Right lobe of liver (tissue), 6 donors: ENCODE measurements at regions of chr17 and their contacts with region 1.

Region 1: DNA sequence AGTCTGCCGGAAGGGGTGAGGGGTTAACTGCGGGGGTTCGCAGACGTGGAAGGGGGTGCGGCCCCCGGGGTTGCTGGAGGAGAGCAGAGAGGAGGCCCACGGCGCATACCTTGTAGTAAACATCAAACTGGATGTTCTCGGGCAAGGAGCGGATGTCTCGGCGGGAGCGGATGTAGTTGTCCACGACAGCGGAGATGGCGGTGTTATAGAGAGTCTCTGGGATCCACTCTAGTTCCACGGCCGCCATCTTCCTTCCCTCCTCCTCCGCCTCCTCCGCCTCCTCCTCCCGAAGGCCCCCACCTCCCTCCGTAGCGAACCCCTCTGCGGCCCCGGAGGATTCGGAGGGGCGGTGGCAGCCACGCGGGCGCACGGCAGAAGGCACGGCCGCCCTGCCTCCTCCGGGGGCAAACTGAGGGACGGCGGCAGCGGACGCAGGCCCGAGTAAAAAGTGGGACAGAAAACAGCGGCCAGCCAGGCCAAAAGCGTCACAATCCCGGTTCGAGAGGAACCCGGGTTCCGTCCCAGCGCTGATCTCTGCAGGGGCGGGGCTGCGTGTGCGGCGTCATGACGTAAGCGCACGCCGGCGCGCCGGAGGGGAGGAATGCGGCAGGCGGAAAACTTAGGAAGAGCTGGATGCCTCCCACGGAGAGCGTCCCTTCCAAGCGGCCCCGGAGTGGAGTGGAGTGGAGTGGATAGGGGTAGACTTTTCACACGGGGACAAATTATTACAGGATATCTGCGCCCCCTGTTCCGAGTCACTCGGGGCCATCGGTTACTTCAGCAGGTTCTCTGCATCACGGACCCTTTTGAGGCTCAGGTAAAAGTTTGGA is at the start of gene APPBP2:
- DNase-seq: peak; percentile 89 to 91 (median 91)
- ATAC-seq: peak; percentile 97 to 98 (median 98)
- H3K4me3 ChIP-seq: peak within 1 kb of the TSS; percentile 71 to 93 (median 79)
- H3K27ac ChIP-seq: peak within 1 kb of the TSS; percentile 88 to 99 (median 95)
- H3K4me1 ChIP-seq: peaks cover 0 to 25% (median 6%) of the 10 kb centered on the region in 4 donors
- H3K27me3 ChIP-seq: no peaks in the 10 kb centered on the region
- CTCF ChIP-seq: no peak
- POLR2A ChIP-seq: peak; percentile 83
- total RNA-seq, gene APPBP2: 8.7 to 19.3 (median 13.0) TPM

Region 2: DNA sequence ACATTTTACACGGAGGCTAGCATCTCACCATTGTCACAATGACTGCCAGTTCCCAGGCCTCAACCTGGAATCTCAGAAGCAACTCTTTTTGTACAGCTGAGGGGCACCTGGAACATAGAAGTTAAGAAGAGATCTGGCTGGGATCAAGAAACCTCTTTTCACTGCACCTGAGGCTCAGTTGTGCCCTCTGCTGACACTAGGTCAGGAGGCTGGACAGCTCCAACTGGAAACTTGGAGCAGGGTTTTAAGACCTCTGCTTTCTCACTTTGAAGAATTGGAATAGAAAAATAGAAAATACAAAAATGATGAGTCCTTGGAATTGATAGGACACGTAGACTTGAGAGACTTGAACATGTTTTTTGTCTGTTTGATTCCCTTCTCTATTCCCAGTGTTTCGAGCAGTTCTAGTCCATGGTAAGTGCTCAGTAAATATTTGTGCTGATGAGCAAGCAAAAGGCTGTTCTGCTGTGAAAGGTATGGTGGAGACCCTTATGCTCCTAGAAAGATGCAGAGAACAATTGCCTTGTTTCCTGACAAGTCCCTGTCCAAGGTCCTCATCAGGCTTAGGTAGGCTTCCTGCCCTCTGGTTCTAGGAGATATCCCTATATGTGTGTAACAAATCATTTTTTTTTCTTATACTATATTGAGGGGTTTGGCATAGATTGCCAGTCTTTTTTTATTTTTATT is 60.5 kb after region 1 on chr17:
- intact Hi-C with region 1: loop called in 1 of 2 experiments (anchors 10 kb)
- DNase-seq: no peak
- ATAC-seq: peak; percentile 42 to 67 (median 56)
- H3K4me3 ChIP-seq: no peak overlapping the region
- H3K27ac ChIP-seq: no peak overlapping the region
- H3K4me1 ChIP-seq: no peaks in the 10 kb centered on the region
- H3K27me3 ChIP-seq: no peaks in the 10 kb centered on the region
- CTCF ChIP-seq: peak in 3 of 4 donors; percentile 11 to 40 (median 33)
- POLR2A ChIP-seq: no peak

Region 3: GRCh38 chr17:60743799-60744198 is 217.9 kb after region 1 on chr17:
- intact Hi-C with region 1: no loop called
- DNase-seq: no peak
- ATAC-seq: no peak
- H3K4me3 ChIP-seq: no peak overlapping the region
- H3K27ac ChIP-seq: no peak overlapping the region
- H3K4me1 ChIP-seq: no peaks in the 10 kb centered on the region
- H3K27me3 ChIP-seq: no peaks in the 10 kb centered on the region
- CTCF ChIP-seq: no peak
- POLR2A ChIP-seq: no peak